RWPE1 (cell line): ENCODE measurements at regions of chr14 and their contacts with region 1.

Region 1: GRCh38 chr14:100285021-100285912 is 21.0 kb downstream of the SLC25A29 start:
- DNase-seq: peak; percentile 85
- H3K27ac ChIP-seq: peak overlapping the region; percentile 79
- CTCF ChIP-seq: peak; percentile 85

Region 2: GRCh38 chr14:100271247-100271939 is 13.9 kb before region 1 on chr14:
- CTCF ChIA-PET with region 1: interaction called, 13 read pairs
- POLR2A ChIA-PET with region 1: no interaction called
- DNase-seq: no peak
- H3K27ac ChIP-seq: no peak overlapping the region
- CTCF ChIP-seq: peak; percentile 45

Region 3: GRCh38 chr14:100332797-100333196 is 47.5 kb after region 1 on chr14:
- CTCF ChIA-PET with region 1: interaction called, 11 read pairs
- POLR2A ChIA-PET with region 1: no interaction called
- DNase-seq: no peak
- H3K27ac ChIP-seq: peak overlapping the region; percentile 3; the same call in 1 of the 2 replicates
- CTCF ChIP-seq: no peak

Region 4: GRCh38 chr14:100547633-100548294 is 262.5 kb after region 1 on chr14:
- CTCF ChIA-PET with region 1: no interaction called
- POLR2A ChIA-PET with region 1: no interaction called
- DNase-seq: peak; percentile 53
- H3K27ac ChIP-seq: peak overlapping the region; percentile 67
- CTCF ChIP-seq: no peak